Sigmoid colon (tissue), 7 donors: ENCODE measurements at regions of chr10 and their contacts with region 1.

Region 1: DNA sequence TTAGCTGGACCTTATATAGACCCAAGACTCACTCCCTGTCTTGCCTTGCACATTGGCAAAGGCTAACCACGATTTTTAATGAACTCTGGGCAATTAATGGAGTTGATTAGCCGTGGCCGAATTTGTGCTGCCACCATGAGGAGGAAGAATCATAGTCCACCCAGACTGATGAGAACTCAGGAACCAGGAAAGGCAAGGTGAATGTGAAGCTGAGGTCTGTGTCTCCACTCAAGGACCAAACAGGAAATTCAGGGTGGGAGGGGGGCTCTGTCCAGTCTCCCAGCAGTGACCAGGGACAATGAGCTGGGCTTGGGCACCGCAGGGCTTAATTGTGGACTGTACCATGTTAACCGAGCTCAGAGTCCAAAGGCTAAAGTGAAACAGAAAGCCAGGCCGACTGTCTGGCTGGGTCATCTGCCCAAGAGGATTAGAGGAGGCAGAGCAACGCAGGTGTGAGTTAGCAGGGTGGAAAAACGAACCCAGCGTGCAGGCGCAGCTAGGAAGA is 127.0 kb upstream of the JCAD start:
- DNase-seq: no peak
- H3K4me3 ChIP-seq: peak overlapping the region in 2 of 4 donors; percentile 1 to 19
- H3K27ac ChIP-seq: peak overlapping the region; percentile 51 to 65 (median 60)
- H3K4me1 ChIP-seq: peaks cover 0 to 82% (median 70%) of the 10 kb centered on the region in 4 donors
- H3K27me3 ChIP-seq: no peaks in the 10 kb centered on the region
- CTCF ChIP-seq: no peak
- EP300 ChIP-seq: no peak
- POLR2A ChIP-seq: no peak

Region 2: DNA sequence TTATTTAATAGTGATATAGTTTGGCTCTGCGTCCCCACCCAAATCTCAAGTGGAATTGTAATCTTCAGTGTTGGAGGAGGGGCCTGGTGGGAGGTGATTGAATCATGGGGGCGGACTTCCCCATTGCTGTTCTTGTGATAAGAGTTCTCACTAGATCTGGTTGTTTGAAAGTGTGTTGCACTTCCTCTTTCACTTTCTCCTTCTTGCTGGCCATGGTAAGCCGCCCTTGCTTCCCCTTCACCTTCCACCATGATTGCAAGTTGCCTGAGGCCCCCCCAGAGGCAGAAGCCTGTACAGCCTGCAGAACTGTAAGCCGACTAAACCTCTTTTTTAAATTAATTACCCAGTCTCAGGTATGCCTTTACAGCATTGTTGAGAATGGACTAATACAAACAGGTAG is 61.3 kb after region 1 on chr10:
- intact Hi-C with region 1: no loop called
- DNase-seq: no peak
- H3K4me3 ChIP-seq: no peak overlapping the region
- H3K27ac ChIP-seq: no peak overlapping the region
- H3K4me1 ChIP-seq: no peaks in the 10 kb centered on the region
- H3K27me3 ChIP-seq: no peaks in the 10 kb centered on the region
- CTCF ChIP-seq: no peak
- EP300 ChIP-seq: no peak
- POLR2A ChIP-seq: no peak

Region 3: GRCh38 chr10:30348378-30348776 is 162.0 kb after region 1 on chr10:
- intact Hi-C with region 1: loop called (anchors 5 kb)
- DNase-seq: no peak
- H3K4me3 ChIP-seq: peak overlapping the region; percentile 81 to 94 (median 89)
- H3K27ac ChIP-seq: peak overlapping the region; percentile 78 to 89 (median 83)
- H3K4me1 ChIP-seq: peaks cover 0 to 31% (median 26%) of the 10 kb centered on the region in 4 donors
- H3K27me3 ChIP-seq: no peaks in the 10 kb centered on the region
- CTCF ChIP-seq: no peak
- EP300 ChIP-seq: no peak
- POLR2A ChIP-seq: no peak